Activated B cell treated with CpG ODN at 0.5 μM for 24 hours (primary cell): ENCODE measurements at regions of chr19 and their contacts with region 1.

Region 1: GRCh38 chr19:29844891-29845572 is 33.2 kb downstream of the CCNE1 start:
- DNase-seq: peak; percentile 94
- ATAC-seq: peak; percentile 80
- H3K4me3 Mint-ChIP-seq: peak overlapping the region; percentile 86
- H3K27ac Mint-ChIP-seq: peak overlapping the region; percentile 68
- H3K4me1 Mint-ChIP-seq: peaks cover 12% of the 10 kb centered on the region
- H3K27me3 Mint-ChIP-seq: peaks cover 9% of the 10 kb centered on the region
- CTCF ChIP-seq: no peak

Region 2: DNA sequence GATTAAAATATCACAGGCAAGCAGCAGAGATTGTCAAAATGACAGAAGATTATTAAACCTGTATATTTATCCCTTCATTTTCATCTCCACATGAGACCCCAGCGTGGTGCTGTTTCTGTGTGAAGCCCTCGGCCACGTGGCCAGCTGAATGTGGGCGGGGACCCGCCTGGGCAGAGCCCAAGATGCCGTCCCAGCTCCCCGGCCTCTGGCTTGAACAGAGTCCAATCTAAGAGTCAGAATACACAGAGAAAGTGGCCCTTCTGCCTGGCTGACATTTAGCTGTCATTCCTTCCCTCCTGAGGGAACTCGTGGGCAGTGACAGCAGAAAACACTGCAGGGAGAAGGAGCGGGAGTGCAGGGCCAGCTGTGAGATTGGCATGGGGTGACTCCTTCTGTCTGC is 597.2 kb before region 1 on chr19:
- CTCF ChIA-PET with region 1: no interaction called
- POLR2A ChIA-PET with region 1: no interaction called
- intact Hi-C with region 1: no loop called
- DNase-seq: no peak
- ATAC-seq: no peak
- H3K4me3 Mint-ChIP-seq: no peak overlapping the region
- H3K27ac Mint-ChIP-seq: no peak overlapping the region
- H3K4me1 Mint-ChIP-seq: no peaks in the 10 kb centered on the region
- H3K27me3 Mint-ChIP-seq: peaks cover 5% of the 10 kb centered on the region
- CTCF ChIP-seq: no peak

Region 3: GRCh38 chr19:29665215-29665825 is 179.7 kb before region 1 on chr19 and contains the start of gene PLEKHF1:
- CTCF ChIA-PET with region 1: no interaction called
- POLR2A ChIA-PET with region 1: no interaction called
- intact Hi-C with region 1: loop called (anchors 1 kb)
- DNase-seq: peak; percentile 94
- ATAC-seq: peak; percentile 95
- H3K4me3 Mint-ChIP-seq: peak within 1 kb of the TSS; percentile 79
- H3K27ac Mint-ChIP-seq: peak within 1 kb of the TSS; percentile 68
- H3K4me1 Mint-ChIP-seq: peaks cover 38% of the 10 kb centered on the region
- H3K27me3 Mint-ChIP-seq: no peaks in the 10 kb centered on the region
- CTCF ChIP-seq: no peak
- total RNA-seq, gene PLEKHF1: 5.5 and 5.8 TPM in 2 replicates

Region 4: GRCh38 chr19:29761575-29762232 is 83.3 kb before region 1 on chr19:
- CTCF ChIA-PET with region 1: no interaction called
- POLR2A ChIA-PET with region 1: no interaction called
- intact Hi-C with region 1: loop called (anchors 1 kb)
- DNase-seq: no peak
- ATAC-seq: no peak
- H3K4me3 Mint-ChIP-seq: no peak overlapping the region
- H3K27ac Mint-ChIP-seq: no peak overlapping the region
- H3K4me1 Mint-ChIP-seq: peaks cover 4% of the 10 kb centered on the region
- H3K27me3 Mint-ChIP-seq: peaks cover 6% of the 10 kb centered on the region
- CTCF ChIP-seq: no peak

Region 5: GRCh38 chr19:29787281-29787680 is 57.8 kb before region 1 on chr19:
- CTCF ChIA-PET with region 1: no interaction called
- POLR2A ChIA-PET with region 1: no interaction called
- intact Hi-C with region 1: no loop called
- DNase-seq: no peak
- ATAC-seq: no peak
- H3K4me3 Mint-ChIP-seq: no peak overlapping the region
- H3K27ac Mint-ChIP-seq: no peak overlapping the region
- H3K4me1 Mint-ChIP-seq: no peaks in the 10 kb centered on the region
- H3K27me3 Mint-ChIP-seq: peaks cover 2% of the 10 kb centered on the region
- CTCF ChIP-seq: no peak

Region 6: DNA sequence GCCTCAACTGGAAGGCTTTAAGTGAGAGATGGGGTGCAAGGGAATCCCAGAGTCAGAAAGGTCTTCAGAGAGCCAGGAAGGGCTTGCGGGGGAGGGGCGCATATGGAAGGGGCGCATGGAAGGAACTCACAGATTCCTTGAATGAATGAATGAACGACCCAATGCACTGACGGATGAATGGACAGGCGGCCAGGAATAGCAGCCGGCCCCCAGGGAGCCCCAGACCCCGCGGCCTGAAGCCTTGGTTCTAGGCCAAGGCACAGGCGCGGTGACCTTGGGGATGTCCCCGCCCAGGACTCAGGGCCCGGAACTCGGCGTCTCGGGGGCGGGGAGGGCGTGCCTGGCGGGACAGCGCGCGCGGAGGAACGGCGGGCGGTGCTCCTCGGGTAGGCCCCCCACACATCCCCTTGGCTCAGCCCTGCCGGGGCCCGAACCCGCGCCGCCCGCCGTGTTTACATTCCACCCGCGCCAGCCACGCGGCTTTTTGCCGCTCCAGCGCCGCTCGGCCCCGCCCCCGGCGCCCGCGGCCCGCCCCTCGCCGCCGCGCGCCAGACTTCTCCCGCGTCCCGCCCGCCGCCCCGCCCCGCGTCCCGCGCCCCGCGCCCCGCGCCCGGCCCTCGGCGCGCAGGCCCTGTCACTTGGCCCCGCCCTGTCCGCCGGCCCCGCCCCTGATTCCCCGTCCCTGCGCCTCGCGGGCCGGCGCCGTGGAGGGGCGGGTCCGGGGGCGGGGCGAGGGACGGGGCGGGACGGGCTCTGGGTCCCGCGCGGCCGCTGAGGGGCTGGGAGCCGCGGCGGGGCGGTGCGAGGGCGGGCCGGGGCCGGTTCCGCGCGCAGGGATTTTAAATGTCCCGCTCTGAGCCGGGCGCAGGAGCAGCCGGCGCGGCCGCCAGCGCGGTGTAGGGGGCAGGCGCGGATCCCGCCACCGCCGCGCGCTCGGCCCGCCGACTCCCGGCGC is 33.6 kb before region 1 on chr19 and contains the start of gene CCNE1:
- CTCF ChIA-PET with region 1: no interaction called
- POLR2A ChIA-PET with region 1: interaction called, 6 read pairs
- intact Hi-C with region 1: loop called (anchors 1 kb)
- DNase-seq: peak; percentile 95
- ATAC-seq: peak; percentile 94
- H3K4me3 Mint-ChIP-seq: peak within 1 kb of the TSS; percentile 85
- H3K27ac Mint-ChIP-seq: peak within 1 kb of the TSS; percentile 77
- H3K4me1 Mint-ChIP-seq: peaks cover 18% of the 10 kb centered on the region
- H3K27me3 Mint-ChIP-seq: no peaks in the 10 kb centered on the region
- CTCF ChIP-seq: no peak
- total RNA-seq, gene CCNE1: 3.4 and 4.1 TPM in 2 replicates

Region 7: GRCh38 chr19:29988351-29988750 is 143.3 kb after region 1 on chr19:
- CTCF ChIA-PET with region 1: no interaction called
- POLR2A ChIA-PET with region 1: no interaction called
- intact Hi-C with region 1: no loop called
- DNase-seq: no peak
- ATAC-seq: no peak
- H3K4me3 Mint-ChIP-seq: no peak overlapping the region
- H3K27ac Mint-ChIP-seq: no peak overlapping the region
- H3K4me1 Mint-ChIP-seq: peaks cover 2% of the 10 kb centered on the region
- H3K27me3 Mint-ChIP-seq: no peaks in the 10 kb centered on the region
- CTCF ChIP-seq: no peak